Aorta (tissue), 5 donors: ENCODE measurements at regions of chr12 and their contacts with region 1.

Region 1: DNA sequence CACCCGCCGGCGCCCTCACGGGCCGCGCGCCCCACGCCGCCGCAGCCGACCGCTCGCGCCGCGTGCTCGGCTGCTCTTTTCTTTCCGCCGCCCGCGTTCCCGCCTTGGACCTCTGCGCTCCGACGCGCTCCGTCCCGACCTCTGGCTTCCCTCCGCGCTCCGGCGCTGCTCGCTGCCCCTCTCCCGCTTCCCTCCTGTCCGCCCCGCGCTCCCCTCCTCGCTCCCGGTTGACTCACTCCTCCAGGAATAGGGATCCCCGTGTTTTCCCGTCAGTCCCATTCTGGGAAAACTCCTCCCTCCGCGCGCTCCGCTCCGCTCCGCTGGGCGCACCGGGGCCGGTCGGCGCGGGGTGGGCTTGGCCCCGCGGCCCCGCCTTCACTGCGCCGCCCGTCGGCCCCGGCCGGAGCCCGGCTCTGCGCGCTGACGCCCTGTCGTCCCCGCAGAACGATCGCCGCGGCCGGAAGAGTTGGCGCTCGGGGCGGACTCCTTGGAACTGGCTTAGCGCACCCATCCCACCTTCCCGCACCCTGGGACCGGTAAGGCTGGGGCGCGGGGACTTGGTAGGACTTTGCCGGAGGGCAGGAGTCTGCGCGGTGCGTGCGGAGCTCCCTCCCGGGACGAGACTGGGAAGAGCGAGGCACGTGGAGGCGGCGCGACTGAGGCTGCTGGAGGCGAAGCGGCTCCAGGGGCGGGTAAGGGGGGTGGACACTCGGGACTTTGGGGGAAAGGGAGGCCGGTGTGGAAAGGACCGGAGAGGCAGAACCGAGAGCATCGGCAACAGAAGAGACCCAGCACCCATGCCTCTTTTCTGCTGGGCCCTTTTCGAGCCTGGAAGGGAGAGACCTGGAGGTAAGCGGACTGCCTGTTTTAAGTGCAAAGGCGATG is 550 bp downstream of the TEAD4 start:
- DNase-seq: peak; percentile 83 to 93
- ATAC-seq: peak; percentile 78
- H3K4me3 ChIP-seq: peak overlapping the region; percentile 38 to 96
- H3K27ac ChIP-seq: peak overlapping the region in 1 of 2 donors; percentile 81
- H3K4me1 ChIP-seq: no peaks in the 10 kb centered on the region
- H3K27me3 ChIP-seq: no peaks in the 10 kb centered on the region

Region 2: GRCh38 chr12:2998789-2999264 is 39.1 kb after region 1 on chr12:
- intact Hi-C with region 1: loop called in 1 of 2 experiments (anchors 1 kb)
- DNase-seq: peak; percentile 79 to 92
- ATAC-seq: peak; percentile 86
- H3K4me3 ChIP-seq: no peak overlapping the region
- H3K27ac ChIP-seq: peak overlapping the region in 1 of 2 donors; percentile 10
- H3K4me1 ChIP-seq: no peaks in the 10 kb centered on the region
- H3K27me3 ChIP-seq: no peaks in the 10 kb centered on the region

Region 3: GRCh38 chr12:3041558-3042164 is 81.9 kb after region 1 on chr12:
- intact Hi-C with region 1: loop called in 1 of 2 experiments (anchors 5 kb)
- DNase-seq: peak; percentile 72 to 79
- ATAC-seq: peak; percentile 65
- H3K4me3 ChIP-seq: no peak overlapping the region
- H3K27ac ChIP-seq: no peak overlapping the region
- H3K4me1 ChIP-seq: no peaks in the 10 kb centered on the region
- H3K27me3 ChIP-seq: no peaks in the 10 kb centered on the region

Region 4: DNA sequence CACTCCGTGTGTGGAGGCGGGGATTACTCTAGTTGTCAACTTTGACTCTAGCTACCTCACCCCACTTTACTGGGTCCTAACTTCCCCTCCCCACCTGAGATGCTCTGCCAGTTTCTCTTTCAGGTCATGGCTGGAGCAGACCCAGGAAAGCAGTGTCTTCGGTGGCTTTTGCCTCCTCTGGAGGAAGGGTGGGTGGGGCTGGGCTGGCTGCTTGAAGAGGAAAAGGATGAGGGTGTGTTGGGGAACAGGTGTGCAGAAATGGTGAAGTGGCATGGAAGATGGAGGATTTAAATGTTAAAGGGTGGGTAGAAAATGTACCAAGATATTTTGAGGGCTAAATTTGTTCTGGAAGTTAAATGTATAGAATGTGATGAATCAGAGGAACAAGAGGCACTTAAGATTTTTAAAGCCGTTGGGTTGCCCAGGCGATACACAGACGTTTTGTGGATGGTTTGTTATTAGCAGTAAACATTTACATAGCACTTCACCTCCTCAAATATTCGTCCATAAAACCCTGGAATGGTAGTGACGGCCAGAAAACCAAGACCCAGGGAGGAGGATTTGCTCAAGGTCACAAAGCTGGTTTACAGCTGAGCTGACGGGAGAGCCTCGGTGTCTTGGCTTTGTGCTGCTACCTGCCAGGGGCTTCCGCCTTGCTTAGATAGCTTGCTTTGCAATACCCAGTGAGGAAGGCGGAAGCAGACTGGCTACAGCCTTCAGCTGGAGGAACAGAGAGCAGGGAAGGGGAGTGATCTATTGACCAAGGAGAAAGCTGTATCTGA is 459.1 kb after region 1 on chr12:
- intact Hi-C with region 1: no loop called
- DNase-seq: no peak
- ATAC-seq: no peak
- H3K4me3 ChIP-seq: no peak overlapping the region
- H3K27ac ChIP-seq: no peak overlapping the region
- H3K4me1 ChIP-seq: no peaks in the 10 kb centered on the region
- H3K27me3 ChIP-seq: no peaks in the 10 kb centered on the region

Region 5: DNA sequence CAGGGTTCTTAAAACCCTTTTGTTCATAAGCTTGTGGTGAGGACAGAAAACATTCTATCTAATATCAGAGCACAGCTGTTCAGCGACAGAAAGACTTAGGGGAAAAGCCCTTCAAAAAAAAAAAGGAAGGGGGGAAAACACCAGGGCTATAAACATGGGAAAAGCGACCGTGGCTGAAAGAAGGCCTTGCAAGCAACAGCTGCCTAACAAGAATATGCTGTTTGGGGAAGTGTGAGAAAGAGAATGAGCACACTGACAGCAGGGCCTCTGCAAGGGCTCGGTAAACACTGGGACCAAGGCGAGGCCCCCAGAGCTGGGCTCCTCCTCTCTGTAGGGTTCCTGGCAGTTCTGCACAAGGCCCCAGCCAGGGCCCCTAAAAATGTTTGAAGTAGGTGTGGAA is 1286.4 kb after region 1 on chr12:
- intact Hi-C with region 1: no loop called
- DNase-seq: no peak
- ATAC-seq: no peak
- H3K4me3 ChIP-seq: no peak overlapping the region
- H3K27ac ChIP-seq: no peak overlapping the region
- H3K4me1 ChIP-seq: no peaks in the 10 kb centered on the region
- H3K27me3 ChIP-seq: no peaks in the 10 kb centered on the region